T-cell (primary cell): ENCODE measurements at regions of chr15 and their contacts with region 1.

Region 1: GRCh38 chr15:40550341-40551037 is 14.4 kb downstream of the CCDC32 start:
- DNase-seq: no peak
- ATAC-seq: no peak
- H3K4me3 ChIP-seq: no peak overlapping the region
- H3K4me3 Mint-ChIP-seq: no peak overlapping the region
- H3K27ac ChIP-seq: no peak overlapping the region
- H3K27ac Mint-ChIP-seq: no peak overlapping the region
- H3K4me1 ChIP-seq: no peaks in the 10 kb centered on the region
- H3K4me1 Mint-ChIP-seq: peaks cover 0 to 12% (median 0%) of the 10 kb centered on the region in 3 donors
- H3K27me3 ChIP-seq: no peaks in the 10 kb centered on the region
- H3K27me3 Mint-ChIP-seq: no peaks in the 10 kb centered on the region

Region 2: DNA sequence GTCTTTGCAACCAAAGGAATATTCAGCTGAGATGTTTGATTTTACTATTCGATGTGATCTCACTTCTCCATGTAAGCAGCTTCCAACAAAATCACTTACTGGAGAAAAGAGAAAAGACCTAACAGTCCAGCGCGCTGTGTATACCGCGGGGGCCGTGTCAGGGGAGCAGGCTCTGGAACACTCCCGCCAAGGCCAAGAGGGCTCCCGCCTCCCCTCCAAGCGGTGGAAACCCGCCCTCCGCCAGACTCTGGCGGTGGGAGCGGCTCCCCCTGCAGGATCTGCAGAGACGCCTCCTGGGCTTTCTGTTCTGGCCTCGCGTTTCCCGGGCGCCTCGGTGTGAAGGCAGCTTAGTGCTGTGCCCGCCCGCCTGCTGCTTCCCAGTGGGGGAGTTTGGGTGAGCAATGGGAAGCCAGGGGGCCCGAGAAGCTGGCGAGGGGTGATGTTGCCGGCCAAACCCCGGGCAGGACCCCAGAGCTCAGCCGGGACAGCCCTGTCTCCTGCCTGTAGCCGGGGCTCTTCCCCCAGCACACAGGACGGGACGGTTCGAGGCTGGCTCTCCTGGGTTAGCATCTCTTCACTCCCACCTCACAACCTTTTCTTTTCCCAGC is 43.4 kb before region 1 on chr15:
- CTCF ChIA-PET with region 1: no interaction called
- POLR2A ChIA-PET with region 1: interaction called in 1 of 2 experiments, 14 read pairs
- DNase-seq: peak; percentile 25 to 71 (median 49)
- ATAC-seq: peak; percentile 84 to 90 (median 86)
- H3K4me3 ChIP-seq: peak overlapping the region; percentile 8 to 32
- H3K4me3 Mint-ChIP-seq: peak overlapping the region in 1 of 3 donors; percentile 46
- H3K27ac ChIP-seq: no peak overlapping the region
- H3K27ac Mint-ChIP-seq: peak overlapping the region in 1 of 2 donors; percentile 42
- H3K4me1 ChIP-seq: peaks cover 0 to 20% of the 10 kb centered on the region in 2 experiments
- H3K4me1 Mint-ChIP-seq: peaks cover 21 to 26% (median 22%) of the 10 kb centered on the region in 3 donors
- H3K27me3 ChIP-seq: peaks cover 13 to 60% of the 10 kb centered on the region in 2 experiments
- H3K27me3 Mint-ChIP-seq: peaks cover 46 to 69% of the 10 kb centered on the region in 2 donors

Region 3: DNA sequence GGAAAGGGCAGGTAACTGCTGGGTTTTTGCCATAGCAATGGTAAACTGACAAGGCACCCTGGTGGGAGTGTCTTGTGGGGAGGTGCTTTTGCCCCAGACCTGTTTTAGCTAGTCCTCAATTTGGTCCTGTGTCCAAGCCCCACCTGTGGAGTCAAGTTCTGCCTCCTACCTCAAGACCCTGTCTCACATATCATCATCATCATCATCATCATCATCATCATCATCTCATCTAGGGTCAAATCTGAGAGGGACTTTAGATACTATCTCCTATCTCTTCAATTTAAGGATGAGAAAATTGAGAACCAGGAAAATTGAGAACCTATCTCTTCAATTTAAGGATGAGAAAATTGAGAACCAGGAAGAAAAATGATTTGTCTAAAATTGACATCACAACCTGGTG is 53.4 kb after region 1 on chr15:
- CTCF ChIA-PET with region 1: no interaction called
- POLR2A ChIA-PET with region 1: interaction called, 3 to 13 read pairs
- DNase-seq: no peak
- ATAC-seq: no peak
- H3K4me3 ChIP-seq: no peak overlapping the region
- H3K4me3 Mint-ChIP-seq: no peak overlapping the region
- H3K27ac ChIP-seq: no peak overlapping the region
- H3K27ac Mint-ChIP-seq: no peak overlapping the region
- H3K4me1 ChIP-seq: no peaks in the 10 kb centered on the region
- H3K4me1 Mint-ChIP-seq: peaks cover 0 to 1% (median 0%) of the 10 kb centered on the region in 3 donors
- H3K27me3 ChIP-seq: no peaks in the 10 kb centered on the region
- H3K27me3 Mint-ChIP-seq: no peaks in the 10 kb centered on the region